Heart right ventricle (tissue), 16 donors: ENCODE measurements at regions of chr15 and their contacts with region 1.

Region 1: DNA sequence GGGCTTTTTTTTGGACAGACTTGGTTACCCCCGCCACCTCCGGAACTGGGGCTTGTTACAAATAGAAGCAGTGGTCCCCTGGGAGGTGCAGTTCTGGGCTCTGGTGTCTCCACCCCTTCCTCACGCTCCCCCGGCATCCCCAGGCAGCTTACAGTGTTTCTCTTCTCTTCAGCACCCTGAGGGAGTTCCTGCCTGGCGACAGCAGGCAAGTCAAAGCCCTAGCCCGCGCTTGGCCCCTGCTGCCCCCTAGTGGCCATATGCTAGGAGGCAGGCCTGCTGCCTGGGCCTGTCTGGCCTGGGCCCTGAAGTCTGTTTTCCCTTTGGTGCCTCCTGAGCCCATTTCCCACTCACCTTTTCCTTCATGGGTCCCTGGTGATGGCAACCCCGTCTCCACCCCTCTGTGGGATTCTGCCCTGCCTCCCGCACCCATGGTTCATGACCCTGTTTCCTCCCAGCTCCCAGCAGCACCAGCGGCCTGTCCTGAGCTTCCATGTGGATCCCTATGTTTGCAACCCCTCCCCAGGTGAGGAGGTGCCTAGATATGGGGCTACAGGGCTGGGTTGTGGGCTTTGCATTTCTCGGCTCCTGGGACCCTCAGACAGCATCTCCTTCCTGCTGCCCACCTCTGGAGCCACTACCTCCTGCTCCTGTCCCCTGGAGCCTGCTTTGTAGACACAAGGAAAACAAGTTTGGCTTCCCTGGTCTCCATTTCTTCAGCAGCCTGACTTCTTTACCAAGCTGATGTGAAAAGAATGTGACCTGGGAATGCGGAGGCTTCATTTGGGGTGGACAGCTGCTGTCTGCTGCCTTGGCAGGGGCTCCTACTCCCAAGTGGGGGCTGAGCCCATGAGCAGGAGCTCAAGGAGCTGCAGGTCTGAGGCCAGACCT is 2.2 kb downstream of the SNX22 start:
- DNase-seq: peak; percentile 89 to 91
- ATAC-seq: peak; percentile 69 to 94 (median 86)
- H3K4me3 ChIP-seq: peak overlapping the region in 1 of 10 donors; percentile 14
- H3K27ac ChIP-seq: peak overlapping the region; percentile 7 to 85 (median 78)
- H3K4me1 ChIP-seq: peaks cover 32 to 72% (median 58%) of the 10 kb centered on the region in 9 donors
- H3K27me3 ChIP-seq: peaks cover 0 to 32% (median 0%) of the 10 kb centered on the region in 7 donors
- CTCF ChIP-seq: peak; percentile 96 to 100 (median 98)

Region 2: GRCh38 chr15:64105113-64105704 is 48.5 kb before region 1 on chr15:
- intact Hi-C with region 1: loop called in 1 of 10 experiments (anchors 5 kb)
- DNase-seq: no peak
- ATAC-seq: peak; percentile 31 to 87 (median 66)
- H3K4me3 ChIP-seq: no peak overlapping the region
- H3K27ac ChIP-seq: peak overlapping the region in 9 of 10 donors; percentile 25 to 82 (median 48)
- H3K4me1 ChIP-seq: peaks cover 0 to 96% (median 52%) of the 10 kb centered on the region in 9 donors
- H3K27me3 ChIP-seq: no peaks in the 10 kb centered on the region
- CTCF ChIP-seq: no peak